Tibial artery (tissue), 4 donors: ENCODE measurements at regions of chr21 and their contacts with region 1.

Region 1: GRCh38 chr21:28675331-28676041 is 317.2 kb downstream of the LTN1 start:
- DNase-seq: peak in 1 of 2 donors; percentile 48
- H3K4me3 ChIP-seq: no peak overlapping the region
- H3K27ac ChIP-seq: peak overlapping the region; percentile 14 to 41
- H3K4me1 ChIP-seq: peaks cover 0 to 11% (median 0%) of the 10 kb centered on the region in 4 donors
- H3K27me3 ChIP-seq: no peaks in the 10 kb centered on the region
- CTCF ChIP-seq: no peak

Region 2: DNA sequence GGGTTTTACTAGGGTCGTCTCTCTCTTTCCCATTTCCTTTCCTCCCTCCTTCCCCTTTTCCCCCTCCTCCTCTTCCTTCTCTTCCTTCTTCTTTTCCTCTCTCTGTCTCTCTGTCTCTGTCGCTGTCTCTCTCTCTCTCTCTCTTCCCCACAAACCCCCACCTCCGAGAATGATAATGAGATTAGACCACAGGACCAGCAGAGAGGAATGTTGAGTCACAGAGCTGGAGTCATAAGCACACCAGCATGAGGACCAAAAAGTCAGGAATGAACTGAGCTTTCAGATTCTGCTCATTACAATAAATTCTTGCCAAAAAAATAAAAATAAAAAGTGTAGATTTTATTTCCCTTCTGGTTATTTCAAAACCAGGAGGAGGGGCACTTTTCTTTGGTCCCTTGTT is 60.2 kb before region 1 on chr21:
- intact Hi-C with region 1: loop called (anchors 10 kb)
- DNase-seq: no peak
- H3K4me3 ChIP-seq: no peak overlapping the region
- H3K27ac ChIP-seq: no peak overlapping the region
- H3K4me1 ChIP-seq: peaks cover 0 to 17% (median 1%) of the 10 kb centered on the region in 4 donors
- H3K27me3 ChIP-seq: no peaks in the 10 kb centered on the region
- CTCF ChIP-seq: no peak

Region 3: GRCh38 chr21:28754127-28754611 is 78.7 kb after region 1 on chr21:
- intact Hi-C with region 1: no loop called
- DNase-seq: no peak
- H3K4me3 ChIP-seq: no peak overlapping the region
- H3K27ac ChIP-seq: peak overlapping the region; percentile 77 to 84
- H3K4me1 ChIP-seq: peaks cover 0 to 65% (median 14%) of the 10 kb centered on the region in 4 donors
- H3K27me3 ChIP-seq: no peaks in the 10 kb centered on the region
- CTCF ChIP-seq: no peak